ENCODE measurements at regions of chr16 and their contacts with region 1.

Region 1: GRCh38 chr16:84738255-84739038 is 38.6 kb downstream of the USP10 start:
- DNase-seq: peak; percentile 78
- ATAC-seq: peak; percentile 76
- H3K4me3 ChIP-seq: no peak overlapping the region
- H3K27ac ChIP-seq: peak overlapping the region; percentile 7
- H3K4me1 ChIP-seq: peaks cover 66% of the 10 kb centered on the region
- H3K27me3 ChIP-seq: no peaks in the 10 kb centered on the region
- CTCF ChIP-seq: peak; percentile 93
- EP300 ChIP-seq: no peak
- POLR2A ChIP-seq: no peak
- RAD21 ChIP-seq: peak; percentile 39

Region 2: GRCh38 chr16:84672276-84673202 is 65.9 kb before region 1 on chr16:
- CTCF ChIA-PET with region 1: interaction called, 34 read pairs
- POLR2A ChIA-PET with region 1: no interaction called
- in situ Hi-C with region 1: no loop called
- intact Hi-C with region 1: loop called (anchors 1 kb)
- DNase-seq: peak; percentile 58
- ATAC-seq: peak; percentile 82
- H3K4me3 ChIP-seq: 0 out of 6 replicates have a peak overlapping the region, but pooled peaks of 1 of the 3 experiments have one; percentile 29
- H3K27ac ChIP-seq: no peak overlapping the region
- H3K4me1 ChIP-seq: peaks cover 34% of the 10 kb centered on the region
- H3K27me3 ChIP-seq: 0 out of 5 replicates have a peak, but pooled peaks cover 0 to 21% of the 10 kb centered on the region in 2 experiments
- CTCF ChIP-seq: peak; percentile 95
- EP300 ChIP-seq: no peak
- POLR2A ChIP-seq: no peak
- RAD21 ChIP-seq: peak; percentile 86